Common myeloid progenitor, CD34-positive (primary cell): ENCODE measurements at regions of chr3 and their contacts with region 1.

Region 1: DNA sequence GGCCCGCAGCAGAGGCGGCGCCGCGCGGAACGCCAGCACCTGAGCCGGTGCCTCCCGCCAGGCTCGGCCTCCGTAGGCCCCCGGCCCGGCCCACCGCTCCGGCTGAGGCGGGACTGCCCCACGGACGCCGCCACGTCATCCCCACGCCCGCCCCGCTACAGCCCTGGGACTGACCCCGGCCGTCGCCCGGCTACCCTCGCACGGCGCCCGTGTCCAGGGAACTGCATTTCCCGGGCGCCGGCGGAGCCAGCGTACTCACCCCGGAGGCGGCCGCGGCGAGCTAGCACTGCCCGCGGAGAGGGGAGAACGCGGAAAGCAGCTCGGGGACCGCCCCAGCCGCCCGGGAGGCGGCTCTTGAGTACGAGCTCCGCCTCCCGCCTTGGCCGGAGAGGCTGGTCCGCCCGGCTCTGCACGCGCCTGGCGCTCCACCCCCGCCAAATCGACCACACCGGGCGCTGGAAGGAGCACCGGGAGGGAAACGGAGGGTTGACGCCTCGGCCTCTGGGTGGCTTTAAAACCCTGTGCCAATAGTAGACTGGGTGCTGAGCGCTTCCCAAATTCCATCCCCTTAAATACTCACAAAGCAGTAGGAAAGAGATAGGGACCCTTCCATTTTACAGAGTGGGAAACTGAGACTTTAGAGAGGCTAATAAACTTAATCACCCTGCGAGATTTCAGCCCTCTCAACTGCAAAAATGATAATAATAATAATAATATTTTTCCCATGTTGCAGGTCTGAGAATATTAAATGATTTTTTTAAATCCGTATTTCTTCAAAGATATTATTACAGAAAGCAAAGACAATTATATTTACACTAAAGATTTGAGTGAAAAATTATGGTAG is at the start of gene B4GALT4:
- DNase-seq: peak; percentile 72 to 79 (median 76)
- H3K4me3 ChIP-seq: peak within 1 kb of the TSS; percentile 55 to 91 (median 78)
- H3K27ac ChIP-seq: peak within 1 kb of the TSS; percentile 58 to 82
- H3K4me1 ChIP-seq: peaks cover 17 to 34% (median 26%) of the 10 kb centered on the region in 4 experiments
- H3K27me3 ChIP-seq: no peaks in the 10 kb centered on the region

Region 2: DNA sequence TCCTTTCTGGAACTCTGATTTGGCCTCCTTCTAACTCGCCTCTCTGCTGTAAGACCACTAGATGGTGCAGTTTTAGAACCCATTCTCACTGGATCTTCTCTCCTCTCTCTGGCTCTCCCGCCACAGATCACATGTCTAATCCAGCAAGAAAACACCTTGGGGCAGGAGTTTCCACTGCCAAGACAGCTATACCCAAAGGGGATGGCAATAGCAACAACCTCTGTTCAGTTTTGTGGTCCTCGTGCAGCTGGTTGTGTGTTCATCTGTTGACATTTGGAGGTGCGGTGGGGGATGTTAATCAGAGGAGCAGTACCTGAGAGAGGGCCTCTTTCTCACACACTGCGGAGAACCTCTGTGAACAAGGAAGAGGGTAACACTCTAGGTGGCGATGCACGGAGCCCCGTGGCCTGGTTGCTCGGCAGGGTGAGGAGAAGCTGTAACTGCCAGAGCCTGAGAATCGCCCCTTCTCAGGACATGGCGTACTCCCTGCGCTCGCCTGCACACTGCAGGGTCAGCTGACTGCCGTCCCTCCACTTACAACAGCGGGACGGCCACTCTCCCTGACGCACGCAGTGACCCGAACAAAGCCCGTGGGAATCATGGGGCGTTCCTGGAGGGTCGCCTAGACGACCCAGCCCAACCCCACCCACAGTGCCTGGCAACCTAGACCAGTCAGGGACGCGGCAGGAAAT is 95.2 kb before region 1 on chr3 and contains the start of gene TEX55:
- CTCF ChIA-PET with region 1: interaction called, 14 read pairs
- POLR2A ChIA-PET with region 1: no interaction called
- DNase-seq: peak; percentile 5 to 28 (median 23)
- H3K4me3 ChIP-seq: no peak within 1 kb of the TSS
- H3K27ac ChIP-seq: no peak within 1 kb of the TSS
- H3K4me1 ChIP-seq: no peaks in the 10 kb centered on the region
- H3K27me3 ChIP-seq: no peaks in the 10 kb centered on the region

Region 3: GRCh38 chr3:120021523-120021922 is 780.7 kb after region 1 on chr3:
- CTCF ChIA-PET with region 1: no interaction called
- POLR2A ChIA-PET with region 1: no interaction called
- DNase-seq: no peak
- H3K4me3 ChIP-seq: no peak overlapping the region
- H3K27ac ChIP-seq: no peak overlapping the region
- H3K4me1 ChIP-seq: peaks cover 0 to 14% (median 10%) of the 10 kb centered on the region in 4 experiments
- H3K27me3 ChIP-seq: no peaks in the 10 kb centered on the region